Activated CD8-positive, alpha-beta T cell treated with anti-CD3 and anti-CD28 coated beads for 36 hours (primary cell): ENCODE measurements at regions of chr6 and their contacts with region 1.

Region 1: GRCh38 chr6:7276199-7276524 is 36.8 kb downstream of the SSR1 start:
- DNase-seq: no peak
- ATAC-seq: no peak
- H3K4me3 Mint-ChIP-seq: no peak overlapping the region
- H3K27ac Mint-ChIP-seq: no peak overlapping the region
- H3K4me1 Mint-ChIP-seq: no peaks in the 10 kb centered on the region
- H3K27me3 Mint-ChIP-seq: no peaks in the 10 kb centered on the region
- CTCF ChIP-seq: peak; percentile 49

Region 2: GRCh38 chr6:6890400-6890858 is 385.7 kb before region 1 on chr6:
- CTCF ChIA-PET with region 1: no interaction called
- POLR2A ChIA-PET with region 1: no interaction called
- intact Hi-C with region 1: no loop called
- DNase-seq: no peak
- ATAC-seq: no peak
- H3K4me3 Mint-ChIP-seq: no peak overlapping the region
- H3K27ac Mint-ChIP-seq: no peak overlapping the region
- H3K4me1 Mint-ChIP-seq: peaks cover 4% of the 10 kb centered on the region
- H3K27me3 Mint-ChIP-seq: no peaks in the 10 kb centered on the region
- CTCF ChIP-seq: no peak

Region 3: GRCh38 chr6:7107578-7108195 is 168.5 kb before region 1 on chr6 and contains the start of gene RREB1:
- CTCF ChIA-PET with region 1: no interaction called
- POLR2A ChIA-PET with region 1: no interaction called
- intact Hi-C with region 1: no loop called
- DNase-seq: peak; percentile 74
- ATAC-seq: peak; percentile 56
- H3K4me3 Mint-ChIP-seq: peak within 1 kb of the TSS; percentile 83
- H3K27ac Mint-ChIP-seq: peak within 1 kb of the TSS; percentile 97
- H3K4me1 Mint-ChIP-seq: peaks cover 35% of the 10 kb centered on the region
- H3K27me3 Mint-ChIP-seq: no peaks in the 10 kb centered on the region
- CTCF ChIP-seq: no peak
- total RNA-seq, gene RREB1: 18.7 to 19.7 TPM

Region 4: DNA sequence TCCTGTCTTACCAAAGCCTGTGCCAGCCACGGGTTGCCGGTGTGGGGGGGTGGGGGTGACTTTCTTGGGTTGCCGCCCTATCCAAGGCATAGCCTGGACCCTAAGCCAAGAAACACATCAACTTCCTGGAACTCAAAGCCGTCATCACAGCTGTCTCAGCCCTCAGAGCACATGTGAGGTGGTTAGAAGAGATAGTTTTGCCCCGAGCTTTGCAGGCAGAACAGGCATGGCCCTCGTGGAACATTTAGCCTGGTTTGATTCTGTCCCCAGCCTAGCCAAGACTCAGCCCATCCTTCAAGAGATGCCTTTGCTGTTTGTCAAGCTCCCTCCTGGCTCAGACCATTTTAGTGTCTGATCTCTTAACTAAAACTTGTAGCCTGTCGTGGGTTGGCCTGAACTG is 103.5 kb before region 1 on chr6:
- CTCF ChIA-PET with region 1: no interaction called
- POLR2A ChIA-PET with region 1: no interaction called
- intact Hi-C with region 1: no loop called
- DNase-seq: no peak
- ATAC-seq: no peak
- H3K4me3 Mint-ChIP-seq: no peak overlapping the region
- H3K27ac Mint-ChIP-seq: no peak overlapping the region
- H3K4me1 Mint-ChIP-seq: peaks cover 35% of the 10 kb centered on the region
- H3K27me3 Mint-ChIP-seq: no peaks in the 10 kb centered on the region
- CTCF ChIP-seq: no peak

Region 5: GRCh38 chr6:7261032-7261841 is 14.9 kb before region 1 on chr6:
- CTCF ChIA-PET with region 1: interaction called, 15 read pairs
- POLR2A ChIA-PET with region 1: interaction called, 4 read pairs
- intact Hi-C with region 1: no loop called
- DNase-seq: peak; percentile 69
- ATAC-seq: peak; percentile 89
- H3K4me3 Mint-ChIP-seq: peak overlapping the region; percentile 81
- H3K27ac Mint-ChIP-seq: no peak overlapping the region
- H3K4me1 Mint-ChIP-seq: peaks cover 18% of the 10 kb centered on the region
- H3K27me3 Mint-ChIP-seq: peaks cover 17% of the 10 kb centered on the region
- CTCF ChIP-seq: no peak

Region 6: GRCh38 chr6:7300926-7301325 is 24.8 kb after region 1 on chr6:
- CTCF ChIA-PET with region 1: interaction called, 23 read pairs
- POLR2A ChIA-PET with region 1: interaction called, 3 read pairs
- intact Hi-C with region 1: no loop called
- DNase-seq: no peak
- ATAC-seq: no peak
- H3K4me3 Mint-ChIP-seq: no peak overlapping the region
- H3K27ac Mint-ChIP-seq: no peak overlapping the region
- H3K4me1 Mint-ChIP-seq: peaks cover 27% of the 10 kb centered on the region
- H3K27me3 Mint-ChIP-seq: no peaks in the 10 kb centered on the region
- CTCF ChIP-seq: no peak

Region 7: GRCh38 chr6:7389451-7390225 is 113.5 kb after region 1 on chr6 and contains the starts of genes CAGE1 and RIOK1:
- CTCF ChIA-PET with region 1: interaction called, 14 read pairs
- POLR2A ChIA-PET with region 1: interaction called, 4 read pairs
- intact Hi-C with region 1: no loop called
- DNase-seq: peak; percentile 97
- ATAC-seq: peak; percentile 96
- H3K4me3 Mint-ChIP-seq: peak within 1 kb of the TSS; percentile 89
- H3K27ac Mint-ChIP-seq: peak within 1 kb of the TSS; percentile 98
- H3K4me1 Mint-ChIP-seq: peaks cover 40% of the 10 kb centered on the region
- H3K27me3 Mint-ChIP-seq: no peaks in the 10 kb centered on the region
- CTCF ChIP-seq: no peak
- total RNA-seq, gene CAGE1: 0.11 to 0.18 TPM
- total RNA-seq, gene RIOK1: 46.8 to 50.0 TPM

Region 8: DNA sequence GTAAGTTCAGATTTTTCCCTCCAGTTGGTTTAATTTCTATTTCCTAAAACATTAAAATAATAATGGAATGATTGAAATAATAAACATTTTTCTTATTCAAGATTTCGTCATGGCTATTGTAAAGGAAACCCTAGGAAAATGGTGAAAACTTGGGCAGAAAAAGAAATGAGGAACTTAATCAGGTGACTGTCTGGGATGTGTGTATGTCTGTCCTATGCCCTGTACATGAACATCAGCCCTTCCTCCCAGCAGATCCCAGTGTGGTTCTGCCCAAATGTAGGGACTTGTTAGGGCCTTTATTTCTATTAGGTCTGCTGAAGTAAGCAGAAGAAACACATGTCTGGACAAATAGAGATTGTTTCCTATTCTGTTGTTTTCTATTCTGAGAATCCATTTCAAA is 126.6 kb after region 1 on chr6:
- CTCF ChIA-PET with region 1: no interaction called
- POLR2A ChIA-PET with region 1: no interaction called
- intact Hi-C with region 1: no loop called
- DNase-seq: no peak
- ATAC-seq: no peak
- H3K4me3 Mint-ChIP-seq: no peak overlapping the region
- H3K27ac Mint-ChIP-seq: no peak overlapping the region
- H3K4me1 Mint-ChIP-seq: no peaks in the 10 kb centered on the region
- H3K27me3 Mint-ChIP-seq: no peaks in the 10 kb centered on the region
- CTCF ChIP-seq: no peak

Region 9: DNA sequence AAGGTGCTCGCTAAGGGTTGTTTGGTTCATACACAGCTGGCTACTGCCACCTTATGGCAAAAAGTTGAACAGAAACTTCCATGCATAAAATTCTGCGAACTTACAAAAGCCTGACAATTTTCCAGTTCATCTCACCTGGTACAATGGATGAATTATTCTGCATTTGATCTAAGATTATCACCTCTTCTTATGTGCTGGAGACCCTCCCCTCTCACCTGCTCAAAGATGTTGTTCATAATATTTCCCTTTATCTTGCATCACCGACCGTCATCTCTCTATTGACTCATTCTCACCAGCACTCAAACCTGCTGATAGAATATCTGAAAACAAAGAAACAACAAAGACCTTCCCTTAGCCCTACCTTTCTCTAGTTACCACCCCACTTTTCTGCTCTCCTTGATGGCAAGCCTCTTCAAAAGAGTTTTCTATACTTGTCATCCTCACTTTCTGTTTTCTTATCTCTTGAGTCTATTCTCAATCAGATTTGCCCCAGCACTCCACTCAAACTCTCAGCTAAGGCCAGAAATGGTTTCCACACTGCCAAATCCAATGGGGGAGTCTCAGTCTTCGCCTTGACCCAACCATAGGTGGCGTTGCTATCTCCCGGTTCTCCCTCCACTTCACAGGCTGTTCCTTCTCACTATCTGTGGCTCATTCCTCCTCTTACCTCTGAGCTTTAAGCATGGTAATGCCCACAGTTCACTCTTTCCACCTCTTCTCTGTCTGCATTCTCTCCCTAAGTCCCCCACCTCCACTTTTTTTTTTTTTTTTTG is 339.6 kb after region 1 on chr6:
- CTCF ChIA-PET with region 1: interaction called, 36 read pairs
- POLR2A ChIA-PET with region 1: no interaction called
- intact Hi-C with region 1: loop called (anchors 1 kb)
- DNase-seq: peak; percentile 41
- ATAC-seq: peak; percentile 51
- H3K4me3 Mint-ChIP-seq: no peak overlapping the region
- H3K27ac Mint-ChIP-seq: no peak overlapping the region
- H3K4me1 Mint-ChIP-seq: peaks cover 15% of the 10 kb centered on the region
- H3K27me3 Mint-ChIP-seq: peaks cover 2% of the 10 kb centered on the region
- CTCF ChIP-seq: peak; percentile 79